Natural killer cell (primary cell): ENCODE measurements at regions of chr17 and their contacts with region 1.

Region 1: DNA sequence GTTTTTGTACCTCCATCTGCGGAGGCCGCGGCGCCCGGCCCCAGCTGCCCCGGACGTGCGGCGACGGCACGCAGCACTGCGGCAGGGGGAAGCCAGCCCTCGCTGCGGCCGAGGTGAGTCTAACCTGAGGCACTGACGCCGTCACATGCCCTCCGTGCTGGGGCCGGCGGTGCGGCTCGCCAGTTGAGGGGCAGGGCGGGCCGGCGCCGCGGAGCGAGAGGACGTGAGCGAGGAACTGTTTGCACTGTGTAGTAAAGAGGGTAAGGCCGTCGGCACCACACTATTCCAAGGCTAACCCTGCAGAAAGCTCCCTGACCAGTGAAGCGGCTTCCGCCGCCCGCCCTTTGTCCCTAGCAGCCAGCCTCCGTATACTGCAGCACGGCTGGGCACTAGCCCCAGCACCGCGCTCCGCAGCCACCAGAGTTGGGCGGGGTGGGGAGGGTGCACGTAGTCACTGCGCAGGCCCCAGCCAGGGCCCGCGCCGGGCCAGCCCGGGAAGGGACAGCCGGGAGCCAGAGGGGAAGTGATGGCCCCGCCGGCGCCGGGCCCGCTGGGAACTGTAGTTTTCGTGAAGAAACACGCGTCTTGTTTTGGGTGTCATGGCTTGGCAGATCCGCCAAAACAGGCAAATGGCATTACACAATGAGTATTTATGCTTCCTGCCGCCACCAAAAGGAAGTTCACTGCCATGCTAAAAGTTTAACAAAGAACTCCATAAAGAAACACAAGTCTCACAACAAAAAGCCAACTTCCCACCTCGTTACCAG is 580 bp upstream of the KANSL1 start:
- DNase-seq: peak; percentile 84 to 95
- ATAC-seq: peak; percentile 67 to 86 (median 73)
- H3K4me3 ChIP-seq: peak overlapping the region; percentile 98
- H3K4me3 Mint-ChIP-seq: peak overlapping the region; percentile 84
- H3K27ac ChIP-seq: peak overlapping the region; percentile 100
- H3K27ac Mint-ChIP-seq: peak overlapping the region; percentile 95 to 99
- H3K4me1 ChIP-seq: peaks cover 23% of the 10 kb centered on the region
- H3K4me1 Mint-ChIP-seq: peaks cover 48 to 50% of the 10 kb centered on the region in 2 donors
- H3K27me3 ChIP-seq: no peaks in the 10 kb centered on the region
- H3K27me3 Mint-ChIP-seq: no peaks in the 10 kb centered on the region
- CTCF ChIP-seq: peak; percentile 17

Region 2: GRCh38 chr17:45148183-45149036 is 1045.4 kb before region 1 on chr17 and contains the start of gene HEXIM1:
- intact Hi-C with region 1: loop called (anchors 10 kb)
- DNase-seq: peak; percentile 99
- ATAC-seq: peak; percentile 77 to 92 (median 82)
- H3K4me3 ChIP-seq: peak within 1 kb of the TSS; percentile 88
- H3K4me3 Mint-ChIP-seq: peak within 1 kb of the TSS; percentile 100
- H3K27ac ChIP-seq: peak within 1 kb of the TSS; percentile 98
- H3K27ac Mint-ChIP-seq: peak within 1 kb of the TSS; percentile 98 to 100
- H3K4me1 ChIP-seq: peaks cover 52% of the 10 kb centered on the region
- H3K4me1 Mint-ChIP-seq: peaks cover 51 to 65% of the 10 kb centered on the region in 2 donors
- H3K27me3 ChIP-seq: no peaks in the 10 kb centered on the region
- H3K27me3 Mint-ChIP-seq: no peaks in the 10 kb centered on the region
- CTCF ChIP-seq: no peak
- total RNA-seq, gene HEXIM1: 64.9 to 80.7 (median 79.8) TPM

Region 3: GRCh38 chr17:46121841-46122485 is 71.8 kb before region 1 on chr17:
- intact Hi-C with region 1: loop called (anchors 5 kb)
- DNase-seq: peak in 1 of 2 donors; percentile 32
- ATAC-seq: peak; percentile 46 to 66 (median 58)
- H3K4me3 ChIP-seq: no peak overlapping the region
- H3K4me3 Mint-ChIP-seq: peak overlapping the region; percentile 10
- H3K27ac ChIP-seq: no peak overlapping the region
- H3K27ac Mint-ChIP-seq: peak overlapping the region; percentile 60 to 83
- H3K4me1 ChIP-seq: peaks cover 17% of the 10 kb centered on the region
- H3K4me1 Mint-ChIP-seq: peaks cover 70 to 77% of the 10 kb centered on the region in 2 donors
- H3K27me3 ChIP-seq: no peaks in the 10 kb centered on the region
- H3K27me3 Mint-ChIP-seq: no peaks in the 10 kb centered on the region
- CTCF ChIP-seq: no peak

Region 4: DNA sequence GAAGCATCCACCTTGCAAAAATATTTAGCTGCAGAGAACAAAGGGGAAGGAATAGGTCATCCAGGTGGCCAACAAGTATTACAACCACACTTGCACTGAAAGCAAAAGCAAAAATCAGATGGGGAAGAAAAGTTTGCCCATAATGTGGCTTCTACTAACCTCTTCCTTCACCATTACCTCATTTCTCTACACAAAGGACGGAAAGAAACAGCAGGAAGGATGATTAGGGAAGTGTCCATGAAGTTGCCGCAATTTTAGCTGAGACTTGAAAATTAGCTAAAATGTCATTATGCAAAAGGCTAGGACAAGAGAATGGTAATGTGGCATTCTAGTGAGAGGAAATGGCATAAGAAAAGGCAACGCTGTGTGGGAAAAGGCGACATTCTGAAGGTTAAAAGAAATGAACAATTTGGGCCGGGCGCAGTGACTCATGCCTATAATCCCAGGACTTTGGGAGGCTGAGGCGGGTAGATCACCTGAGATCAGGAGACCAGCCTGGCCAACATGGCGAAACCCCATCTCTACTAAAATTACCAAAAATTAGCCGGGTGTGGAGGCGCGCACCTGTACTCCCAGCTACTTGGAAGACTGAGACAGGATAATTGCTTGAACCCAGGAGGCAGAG is 14.3 kb before region 1 on chr17:
- intact Hi-C with region 1: loop called (anchors 2 kb)
- DNase-seq: no peak
- ATAC-seq: peak; percentile 58 to 72 (median 69)
- H3K4me3 ChIP-seq: no peak overlapping the region
- H3K4me3 Mint-ChIP-seq: peak overlapping the region; percentile 74
- H3K27ac ChIP-seq: peak overlapping the region; percentile 19
- H3K27ac Mint-ChIP-seq: peak overlapping the region; percentile 79 to 80
- H3K4me1 ChIP-seq: peaks cover 45% of the 10 kb centered on the region
- H3K4me1 Mint-ChIP-seq: peaks cover 77 to 79% of the 10 kb centered on the region in 2 donors
- H3K27me3 ChIP-seq: no peaks in the 10 kb centered on the region
- H3K27me3 Mint-ChIP-seq: no peaks in the 10 kb centered on the region
- CTCF ChIP-seq: no peak

Region 5: DNA sequence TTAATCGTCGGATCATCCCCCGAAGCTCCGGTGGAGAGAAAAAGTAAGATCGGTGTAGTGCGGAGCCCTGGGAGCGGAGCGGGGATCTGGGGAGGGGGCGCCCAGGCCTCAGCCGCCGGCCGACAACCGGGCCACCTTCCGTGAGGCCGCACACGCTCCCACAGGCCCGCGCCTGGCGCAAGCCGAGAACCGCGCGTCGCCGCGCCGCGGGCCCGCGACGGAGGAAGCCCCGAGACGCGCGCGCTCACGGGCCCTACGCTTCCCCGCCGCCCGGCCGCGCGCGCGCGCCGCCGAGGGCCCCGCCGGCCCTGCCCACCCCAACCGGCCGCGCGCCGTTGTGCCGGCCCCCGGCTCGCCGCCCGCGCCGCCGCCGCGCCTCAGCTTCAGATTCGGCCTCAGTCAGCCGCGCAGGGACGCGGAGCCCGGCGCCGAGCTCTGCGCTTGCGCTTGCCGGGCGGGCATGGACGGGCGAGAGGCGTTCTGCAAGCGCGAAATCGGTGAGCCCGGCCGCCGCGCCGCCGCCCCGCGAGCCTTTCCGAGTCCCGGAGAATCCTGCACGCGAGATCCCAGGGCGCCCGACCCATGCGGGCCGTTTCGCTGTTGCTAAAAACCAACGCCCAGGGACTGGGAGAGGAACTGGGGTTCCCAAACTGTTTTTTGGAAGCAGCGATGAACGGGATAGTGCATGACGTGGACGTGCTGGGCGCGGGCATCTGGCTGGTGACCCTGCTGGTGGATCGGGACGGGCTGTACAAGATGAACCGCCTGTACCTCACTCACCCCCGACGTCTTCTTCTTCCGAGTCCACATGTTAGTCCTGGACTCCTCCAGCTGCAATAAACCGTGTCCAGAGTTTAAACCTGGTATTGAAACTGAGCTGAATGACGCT is 73.1 kb after region 1 on chr17:
- intact Hi-C with region 1: loop called (anchors 5 kb)
- DNase-seq: peak; percentile 86 to 93
- ATAC-seq: peak; percentile 77 to 95 (median 88)
- H3K4me3 ChIP-seq: peak overlapping the region; percentile 98
- H3K4me3 Mint-ChIP-seq: peak overlapping the region; percentile 94
- H3K27ac ChIP-seq: peak overlapping the region; percentile 83
- H3K27ac Mint-ChIP-seq: peak overlapping the region; percentile 85 to 91
- H3K4me1 ChIP-seq: peaks cover 40% of the 10 kb centered on the region
- H3K4me1 Mint-ChIP-seq: peaks cover 32 to 33% of the 10 kb centered on the region in 2 donors
- H3K27me3 ChIP-seq: no peaks in the 10 kb centered on the region
- H3K27me3 Mint-ChIP-seq: peaks cover 0 to 3% of the 10 kb centered on the region in 2 donors
- CTCF ChIP-seq: no peak